ENCODE measurements at regions of chr1 and their contacts with region 1.

Region 1: DNA sequence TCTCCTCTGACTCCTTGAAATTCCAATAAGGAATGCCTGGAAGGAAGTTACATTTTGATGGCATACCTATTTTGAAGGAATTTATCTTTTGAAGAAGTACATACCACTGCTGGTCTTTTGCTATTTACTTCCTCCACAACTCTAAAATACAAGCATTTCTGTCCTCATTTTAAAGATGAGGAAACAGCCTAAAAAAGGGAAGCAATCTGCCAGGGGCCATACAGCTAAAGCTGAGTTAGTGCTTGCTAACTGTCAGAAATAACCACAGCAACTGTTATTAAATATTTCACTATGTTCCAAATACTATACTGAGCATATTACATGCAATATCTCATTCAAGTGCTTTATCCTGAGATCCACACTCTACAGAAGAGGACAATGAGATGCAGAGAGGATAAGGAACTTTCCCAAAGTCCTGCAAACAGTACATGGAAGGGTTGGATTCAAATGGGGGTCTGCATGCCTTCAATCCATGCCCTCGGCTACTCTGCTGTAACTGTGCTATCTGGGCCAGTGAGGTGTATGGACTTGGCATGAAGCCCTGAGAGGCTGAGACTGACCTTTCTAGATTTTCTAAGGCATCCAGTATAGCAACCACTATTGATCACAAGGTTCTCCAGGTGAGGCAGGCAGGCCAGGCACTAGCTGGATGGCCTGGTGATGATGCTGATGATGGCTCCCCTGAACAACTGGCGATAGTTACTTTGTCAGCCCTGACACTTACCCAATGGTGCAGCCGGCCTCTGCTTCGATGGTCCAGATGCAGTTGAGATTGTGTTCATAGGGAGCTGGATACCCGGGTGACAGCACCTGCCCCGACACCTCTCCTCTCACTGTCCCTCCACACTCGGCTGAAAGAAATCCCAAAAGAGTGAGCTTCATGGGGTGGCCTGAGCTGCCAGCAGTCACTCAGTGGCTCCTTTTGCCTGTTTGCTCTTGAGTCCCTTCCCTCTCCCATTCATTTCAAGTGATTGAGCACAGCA is 171.4 kb upstream of the HMGB4 start:
- DNase-seq: no peak

Region 2: DNA sequence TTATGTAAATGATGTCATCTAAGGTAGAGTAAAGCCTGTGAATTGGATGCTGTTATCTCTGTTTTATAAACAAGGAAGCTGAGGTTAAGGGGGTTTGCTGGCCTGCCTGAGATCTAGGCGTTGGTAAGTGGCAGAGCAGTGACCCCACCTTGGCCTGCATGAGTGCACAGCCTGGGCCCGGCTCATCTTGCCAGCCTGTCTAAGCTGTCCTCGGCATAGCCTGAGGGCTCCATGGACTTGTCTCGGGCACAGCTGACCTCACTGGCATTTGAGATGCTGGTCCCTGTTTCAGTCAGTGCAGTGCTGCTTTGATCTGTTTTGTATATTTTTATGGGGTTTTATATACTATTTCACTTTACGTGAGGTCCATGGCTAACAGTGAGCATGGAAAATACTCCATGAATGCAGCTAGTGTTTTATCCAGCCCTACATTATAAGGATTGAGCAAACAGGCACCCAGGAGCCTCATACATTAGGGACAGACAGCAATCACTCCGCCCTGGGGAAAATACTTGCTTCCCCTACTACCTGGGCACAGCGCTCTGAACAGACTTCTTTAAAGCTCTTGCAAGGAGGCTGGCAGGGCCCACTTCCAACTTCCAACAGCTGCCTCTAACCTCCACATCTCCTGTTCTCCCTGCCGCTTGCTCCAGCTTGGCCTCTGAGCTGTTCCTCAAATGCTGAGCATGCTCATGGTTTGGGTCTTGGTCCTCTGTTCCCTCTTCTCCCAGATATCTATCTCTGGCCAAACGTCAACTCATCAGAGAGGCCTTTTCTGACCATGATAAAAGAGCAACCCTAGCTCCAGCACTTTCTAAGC is 20.8 kb after region 1 on chr1:
- intact Hi-C with region 1: loop called in 1 of 2 experiments (anchors 1 kb)
- DNase-seq: peak; percentile 58

Region 3: DNA sequence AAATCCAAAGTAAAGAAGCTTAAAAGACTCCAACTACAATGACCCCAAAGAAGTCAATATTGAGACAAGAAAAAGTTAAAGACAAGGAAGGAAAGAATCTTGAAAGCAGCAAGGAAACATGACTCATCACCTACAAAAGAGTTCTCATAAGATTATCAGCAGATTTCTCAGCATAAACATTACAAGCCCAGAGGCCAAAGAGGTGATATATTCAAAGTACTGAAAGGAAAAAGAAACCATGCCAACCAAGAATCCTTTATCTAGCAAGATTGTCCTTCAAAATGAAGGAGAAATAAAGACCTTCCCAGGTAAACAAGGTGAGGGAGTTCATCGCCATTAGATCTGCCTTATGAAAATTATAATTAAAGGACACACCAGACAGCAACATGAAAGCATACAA is 422.7 kb after region 1 on chr1:
- intact Hi-C with region 1: no loop called
- DNase-seq: no peak